ENCODE measurements at regions of chr16 and their contacts with region 1.

Region 1: DNA sequence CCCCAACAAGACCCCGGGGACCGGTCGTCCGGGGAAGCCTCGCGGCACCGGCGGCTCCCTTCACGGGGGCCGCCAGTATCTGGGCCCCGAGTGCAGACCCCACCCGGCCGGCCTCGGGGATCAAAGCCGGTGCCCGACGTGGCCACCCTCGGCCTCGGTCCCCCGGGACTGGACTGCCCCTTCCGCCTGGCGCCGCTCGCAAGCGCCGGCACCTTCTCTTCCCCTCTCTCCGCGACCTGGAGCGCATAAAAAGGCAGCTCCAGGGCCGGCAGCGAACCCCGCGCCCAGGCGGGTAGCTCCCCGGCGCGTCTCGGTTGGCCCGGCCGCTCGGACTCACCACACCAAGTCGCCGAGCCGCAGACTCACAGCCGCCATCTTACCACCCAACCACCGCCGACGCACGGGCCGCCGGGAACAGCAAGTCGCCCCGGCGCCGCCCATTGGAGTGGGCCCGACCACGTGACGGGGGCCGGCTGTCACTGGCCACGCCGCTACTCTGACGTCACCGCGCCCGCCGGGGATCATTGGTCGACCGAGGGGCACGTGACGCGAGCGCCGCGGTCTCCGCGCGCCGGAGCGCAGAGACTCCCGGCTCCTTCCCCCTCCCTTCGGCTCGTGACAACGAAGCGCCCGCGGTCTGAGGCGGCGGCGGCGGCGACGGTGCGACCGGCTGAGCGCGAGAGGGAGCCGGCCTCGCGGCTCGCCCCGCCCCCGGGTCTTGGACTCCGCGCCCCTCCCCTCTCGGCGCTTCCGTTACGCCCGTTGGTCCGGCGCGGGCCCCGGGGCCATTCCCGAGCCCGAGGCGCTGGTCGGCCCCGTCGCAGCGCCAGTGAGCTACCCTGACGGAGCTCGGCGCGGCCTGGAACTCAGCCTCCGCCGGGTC is at the starts of genes GLYR1 and UBN1:
- DNase-seq: peak; percentile 99 to 100 (median 99)
- ATAC-seq: peak; percentile 95
- H3K4me3 ChIP-seq: peak within 1 kb of the TSS; percentile 84
- H3K4me3 Mint-ChIP-seq: peak within 1 kb of the TSS; percentile 86 to 96 (median 91)
- H3K27ac ChIP-seq: peak within 1 kb of the TSS; percentile 99
- H3K27ac Mint-ChIP-seq: peak within 1 kb of the TSS; percentile 74 to 94 (median 90)
- H3K4me1 ChIP-seq: peaks cover 30 to 38% of the 10 kb centered on the region in 2 donors
- H3K4me1 Mint-ChIP-seq: peaks cover 52 to 66% (median 58%) of the 10 kb centered on the region in 7 donors
- H3K27me3 ChIP-seq: no peaks in the 10 kb centered on the region
- H3K27me3 Mint-ChIP-seq: no peaks in the 10 kb centered on the region
- total RNA-seq, gene GLYR1: 98.7 to 122 (median 108) TPM
- total RNA-seq, gene UBN1: 39.5 to 58.7 (median 42.4) TPM

Region 2: GRCh38 chr16:4538350-4539235 is 308.5 kb before region 1 on chr16 and contains the start of gene CDIP1:
- CTCF ChIA-PET with region 1: no interaction called
- POLR2A ChIA-PET with region 1: interaction called, 3 read pairs
- intact Hi-C with region 1: loop called in 1 of 2 experiments (anchors 1 kb)
- DNase-seq: peak; percentile 85 to 93 (median 90)
- ATAC-seq: peak; percentile 92
- H3K4me3 ChIP-seq: peak within 1 kb of the TSS; percentile 81
- H3K4me3 Mint-ChIP-seq: peak within 1 kb of the TSS; percentile 66 to 91 (median 82)
- H3K27ac ChIP-seq: peak within 1 kb of the TSS; percentile 96
- H3K27ac Mint-ChIP-seq: peak within 1 kb of the TSS; percentile 78 to 97 (median 92)
- H3K4me1 ChIP-seq: peaks cover 10 to 33% of the 10 kb centered on the region in 2 donors
- H3K4me1 Mint-ChIP-seq: peaks cover 24 to 44% (median 40%) of the 10 kb centered on the region in 7 donors
- H3K27me3 ChIP-seq: no peaks in the 10 kb centered on the region
- H3K27me3 Mint-ChIP-seq: peaks cover 0 to 9% (median 0%) of the 10 kb centered on the region in 5 donors
- total RNA-seq, gene CDIP1: 28.1 to 41.1 (median 31.0) TPM

Region 3: DNA sequence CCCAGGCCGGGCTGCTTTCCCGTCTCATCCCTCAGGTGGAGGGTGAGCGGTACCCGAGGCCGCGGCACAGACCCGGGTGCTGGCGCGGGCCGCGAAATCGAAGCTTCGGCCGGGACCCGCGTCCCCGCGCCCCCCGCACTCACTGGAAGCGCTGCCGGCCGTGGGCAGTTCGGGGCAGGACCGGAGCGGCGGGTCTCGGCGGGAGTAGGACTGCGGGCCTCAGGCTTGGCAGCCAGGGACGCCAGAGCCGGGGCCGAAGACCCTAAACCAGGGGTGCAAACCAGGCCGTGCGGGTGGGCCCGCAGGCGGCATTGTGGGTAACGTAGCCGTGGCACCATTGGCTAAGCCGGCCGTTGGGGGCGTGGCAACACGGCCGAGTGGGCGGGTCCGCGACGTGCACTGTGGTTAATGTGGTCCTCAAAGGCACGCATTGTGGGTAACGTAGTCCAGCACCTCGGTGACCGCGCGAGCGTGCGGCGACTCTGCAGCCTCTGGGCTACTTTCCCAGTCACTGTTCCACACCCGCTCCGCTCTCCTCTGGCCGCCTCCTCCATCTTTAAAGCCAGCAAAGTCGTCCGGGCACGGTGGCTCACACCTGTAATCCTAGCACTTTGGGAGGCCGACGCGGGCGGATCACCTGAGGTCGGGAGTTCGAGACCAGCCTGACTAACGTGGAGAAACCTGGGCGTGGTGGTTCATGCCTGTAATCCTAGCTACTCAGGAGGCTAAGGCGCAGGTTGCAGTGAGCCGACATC is 80.1 kb before region 1 on chr16 and contains the start of gene ZNF500:
- CTCF ChIA-PET with region 1: no interaction called
- POLR2A ChIA-PET with region 1: interaction called, 6 read pairs
- intact Hi-C with region 1: loop called (anchors 1 kb)
- DNase-seq: peak; percentile 90 to 98 (median 92)
- ATAC-seq: peak; percentile 99
- H3K4me3 ChIP-seq: peak within 1 kb of the TSS; percentile 82
- H3K4me3 Mint-ChIP-seq: peak within 1 kb of the TSS; percentile 90 to 94 (median 92)
- H3K27ac ChIP-seq: peak within 1 kb of the TSS; percentile 84
- H3K27ac Mint-ChIP-seq: peak within 1 kb of the TSS; percentile 86 to 96 (median 92)
- H3K4me1 ChIP-seq: peaks cover 17 to 19% of the 10 kb centered on the region in 2 donors
- H3K4me1 Mint-ChIP-seq: peaks cover 24 to 49% (median 34%) of the 10 kb centered on the region in 7 donors
- H3K27me3 ChIP-seq: no peaks in the 10 kb centered on the region
- H3K27me3 Mint-ChIP-seq: no peaks in the 10 kb centered on the region
- total RNA-seq, gene ZNF500: 13.8 to 43.0 (median 24.7) TPM

Region 4: DNA sequence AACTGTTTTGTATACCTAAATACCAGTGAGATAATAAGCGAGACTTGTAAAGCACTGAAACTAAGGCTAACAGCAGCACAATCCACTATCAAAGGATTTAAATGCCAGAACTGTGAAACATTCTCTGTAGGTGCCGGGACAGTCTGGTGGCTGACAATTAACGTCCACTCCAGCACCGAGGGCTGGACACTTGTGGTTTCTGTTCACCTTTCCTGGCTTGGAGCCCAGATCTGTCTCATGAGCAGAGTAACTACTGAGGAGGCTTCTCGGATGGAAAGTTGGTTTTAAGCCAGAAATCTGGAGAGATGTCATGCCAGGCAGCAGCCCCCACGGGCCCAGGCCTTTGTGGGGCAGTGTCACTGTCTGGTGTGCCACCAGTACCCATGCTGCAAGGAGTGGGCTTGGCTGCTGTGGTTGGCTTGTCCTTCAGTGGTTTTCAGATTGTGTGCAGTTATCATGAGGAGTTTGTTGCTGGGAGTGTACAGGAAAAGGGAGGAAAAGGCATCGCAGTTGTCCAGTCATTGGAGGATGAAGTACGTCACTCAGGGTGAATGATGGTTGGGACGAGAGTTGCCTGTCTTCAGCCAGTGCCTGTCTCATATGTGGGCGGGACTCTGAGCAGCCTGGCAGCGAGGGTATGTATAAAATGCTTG is 35.6 kb after region 1 on chr16:
- CTCF ChIA-PET with region 1: no interaction called
- POLR2A ChIA-PET with region 1: no interaction called
- intact Hi-C with region 1: no loop called
- DNase-seq: no peak
- ATAC-seq: no peak
- H3K4me3 ChIP-seq: no peak overlapping the region
- H3K4me3 Mint-ChIP-seq: no peak overlapping the region
- H3K27ac ChIP-seq: no peak overlapping the region
- H3K27ac Mint-ChIP-seq: peak overlapping the region in 1 of 9 donors; percentile 29
- H3K4me1 ChIP-seq: no peaks in the 10 kb centered on the region
- H3K4me1 Mint-ChIP-seq: peaks cover 0 to 11% (median 0%) of the 10 kb centered on the region in 7 donors
- H3K27me3 ChIP-seq: no peaks in the 10 kb centered on the region
- H3K27me3 Mint-ChIP-seq: no peaks in the 10 kb centered on the region

Region 5: DNA sequence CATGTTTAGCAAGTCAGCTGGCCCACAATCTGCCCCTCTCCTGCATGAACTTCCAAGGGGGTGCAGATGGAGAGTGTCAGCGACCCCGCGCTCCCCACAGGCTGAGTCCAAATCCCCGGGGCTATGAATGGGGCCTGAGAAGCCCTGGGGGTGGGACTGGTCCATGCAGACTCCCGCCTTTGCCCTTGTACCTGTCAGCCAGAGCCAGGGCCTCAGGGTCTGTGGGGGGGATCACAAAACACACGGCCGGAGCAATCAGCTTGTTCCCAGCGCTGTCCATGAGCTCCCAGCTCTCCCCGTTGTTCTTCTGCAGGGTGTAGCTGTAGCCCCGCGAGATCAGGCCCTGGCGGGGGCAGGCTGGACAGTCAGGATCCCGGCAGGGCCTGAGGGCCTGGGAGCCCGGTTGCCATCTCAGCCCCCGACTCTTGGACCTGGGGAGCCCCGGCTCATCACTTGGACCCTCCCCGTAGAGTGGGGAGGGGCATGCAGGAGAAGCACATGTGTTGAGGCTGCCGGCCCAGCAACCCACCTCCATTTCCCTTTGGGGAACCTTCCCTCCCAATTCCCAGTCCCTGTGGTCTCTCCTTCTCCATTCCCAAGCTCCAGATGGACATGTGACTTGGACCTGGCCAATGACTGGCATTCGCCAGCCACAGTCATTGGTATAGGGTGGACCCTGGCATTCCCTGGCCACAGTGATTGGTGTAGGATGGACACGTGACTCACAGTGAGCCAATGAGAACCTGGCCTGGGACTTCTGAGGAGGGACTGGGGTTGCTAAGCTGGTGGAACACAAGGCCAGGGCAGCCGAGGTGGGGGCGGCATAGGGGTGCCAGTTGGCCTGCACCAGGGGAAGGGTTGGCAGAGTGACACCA is 47.4 kb after region 1 on chr16:
- CTCF ChIA-PET with region 1: no interaction called
- POLR2A ChIA-PET with region 1: no interaction called
- intact Hi-C with region 1: no loop called
- DNase-seq: no peak
- ATAC-seq: no peak
- H3K4me3 ChIP-seq: no peak overlapping the region
- H3K4me3 Mint-ChIP-seq: no peak overlapping the region
- H3K27ac ChIP-seq: no peak overlapping the region
- H3K27ac Mint-ChIP-seq: no peak overlapping the region
- H3K4me1 ChIP-seq: no peaks in the 10 kb centered on the region
- H3K4me1 Mint-ChIP-seq: no peaks in the 10 kb centered on the region
- H3K27me3 ChIP-seq: no peaks in the 10 kb centered on the region
- H3K27me3 Mint-ChIP-seq: peaks cover 0 to 6% (median 0%) of the 10 kb centered on the region in 5 donors

Region 6: DNA sequence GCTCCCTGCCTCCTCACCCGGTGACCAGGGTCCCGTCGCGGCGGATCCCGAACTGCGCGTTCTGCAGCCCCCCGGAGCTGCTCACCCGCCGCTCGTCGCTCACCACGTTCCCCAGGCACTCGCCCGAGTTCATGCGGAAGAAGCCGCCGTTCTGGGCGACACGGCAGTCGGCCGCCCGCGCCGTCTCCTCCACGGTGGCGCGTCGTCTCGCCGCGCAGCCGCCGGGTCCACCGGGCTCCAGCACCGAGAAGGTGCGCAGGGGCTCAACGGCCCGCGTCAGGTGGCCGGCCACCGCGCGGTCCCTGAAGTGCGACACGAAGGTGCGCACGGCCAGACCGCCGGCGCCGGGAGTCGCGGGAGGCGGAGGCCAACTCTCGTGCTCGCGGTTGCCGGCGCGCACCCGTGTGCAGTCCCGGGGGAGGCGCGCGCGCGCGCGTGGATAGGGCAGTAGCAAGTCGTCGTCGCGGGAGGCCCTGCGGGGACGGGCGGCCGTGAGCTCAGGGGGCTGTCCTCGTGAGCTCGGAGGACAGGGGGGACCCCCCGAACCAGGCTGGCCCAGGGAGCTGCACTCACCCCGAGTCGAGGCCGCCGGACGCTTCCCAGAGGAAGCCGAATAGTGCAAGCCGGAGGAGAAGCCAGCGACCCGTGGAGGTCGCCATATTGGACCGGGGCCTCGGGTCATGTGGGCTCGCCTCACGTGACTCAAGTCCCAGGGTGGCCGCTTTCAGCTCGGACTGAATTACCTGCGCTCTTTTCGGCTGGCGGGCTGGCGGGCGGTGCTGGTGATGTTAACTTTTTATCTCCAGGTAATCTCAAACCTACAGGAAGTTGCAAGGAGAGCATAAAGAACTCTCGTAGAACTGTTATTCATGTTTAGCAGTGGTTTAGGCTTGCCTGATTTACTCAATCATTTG is 186.4 kb after region 1 on chr16 and contains the start of gene NAGPA:
- CTCF ChIA-PET with region 1: no interaction called
- POLR2A ChIA-PET with region 1: no interaction called
- intact Hi-C with region 1: loop called (anchors 1 kb)
- DNase-seq: peak; percentile 68 to 91 (median 87)
- ATAC-seq: peak; percentile 93
- H3K4me3 ChIP-seq: peak within 1 kb of the TSS; percentile 80
- H3K4me3 Mint-ChIP-seq: peak within 1 kb of the TSS; percentile 73 to 94 (median 90)
- H3K27ac ChIP-seq: peak within 1 kb of the TSS; percentile 70
- H3K27ac Mint-ChIP-seq: peak within 1 kb of the TSS; percentile 68 to 95 (median 91)
- H3K4me1 ChIP-seq: peaks cover 17 to 18% of the 10 kb centered on the region in 2 donors
- H3K4me1 Mint-ChIP-seq: peaks cover 17 to 33% (median 23%) of the 10 kb centered on the region in 7 donors
- H3K27me3 ChIP-seq: no peaks in the 10 kb centered on the region
- H3K27me3 Mint-ChIP-seq: no peaks in the 10 kb centered on the region
- total RNA-seq, gene NAGPA: 17.8 to 39.5 (median 34.1) TPM